ENCODE measurements at regions of chr1 and their contacts with region 1.

Region 1: DNA sequence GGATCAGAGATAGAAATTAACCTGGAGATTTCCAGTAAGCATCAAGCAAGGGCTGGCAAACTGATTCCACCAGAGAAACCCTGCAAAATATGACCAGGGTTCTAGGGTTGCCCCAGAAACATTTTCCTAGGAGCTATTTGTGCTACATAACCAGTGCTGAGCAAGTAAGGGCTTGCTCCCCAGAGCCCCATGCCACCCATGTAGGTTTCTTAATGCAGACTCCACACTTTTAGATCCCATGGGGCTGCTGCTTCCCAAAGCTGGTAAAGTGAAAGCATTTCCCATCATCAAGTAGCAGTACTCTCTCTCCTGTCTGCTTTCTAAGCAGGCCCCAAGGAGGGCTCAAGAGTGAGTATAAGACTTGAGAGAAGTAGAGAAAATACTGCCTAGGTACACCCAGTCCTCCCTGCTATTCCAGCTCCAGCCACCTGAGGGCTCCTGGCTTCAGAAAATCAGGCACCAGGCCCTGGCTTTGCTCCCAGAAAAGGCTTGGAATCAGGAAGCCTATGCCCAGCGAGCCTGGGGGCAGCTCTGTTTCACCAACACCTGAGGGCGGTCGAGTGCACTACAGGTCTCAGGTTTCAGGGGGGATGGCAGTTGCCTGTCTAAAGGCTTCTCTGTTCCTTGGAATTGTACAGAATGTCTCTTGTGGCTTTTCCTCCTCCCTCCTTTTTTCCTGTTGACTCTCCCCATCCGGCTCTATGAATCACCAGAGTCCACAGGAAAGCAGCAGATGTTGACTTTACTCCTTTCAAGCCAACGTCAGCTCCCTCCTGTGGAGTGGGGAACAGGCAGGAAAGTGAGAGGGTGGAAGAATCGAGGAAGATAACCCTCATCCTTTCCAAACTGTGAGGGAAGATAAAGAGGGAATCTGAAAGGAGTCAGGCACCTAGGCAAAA is 6.2 kb upstream of the ANKRD35 start:
- DNase-seq: peak; percentile 21 to 50 (median 38)
- H3K4me3 ChIP-seq: no peak overlapping the region
- H3K4me3 Mint-ChIP-seq: no peak overlapping the region
- H3K27ac ChIP-seq: no peak overlapping the region
- H3K27ac Mint-ChIP-seq: no peak overlapping the region
- H3K4me1 ChIP-seq: no peaks in the 10 kb centered on the region
- H3K4me1 Mint-ChIP-seq: peaks cover 0 to 2% (median under 1%) of the 10 kb centered on the region in 4 donors
- H3K27me3 ChIP-seq: no peaks in the 10 kb centered on the region
- H3K27me3 Mint-ChIP-seq: peaks cover 0 to under 1% of the 10 kb centered on the region in 2 donors

Region 2: GRCh38 chr1:145879775-145880174 is 12.1 kb before region 1 on chr1:
- CTCF ChIA-PET with region 1: interaction called, 21 read pairs
- POLR2A ChIA-PET with region 1: no interaction called
- intact Hi-C with region 1: no loop called
- DNase-seq: no peak
- H3K4me3 ChIP-seq: no peak overlapping the region
- H3K4me3 Mint-ChIP-seq: no peak overlapping the region
- H3K27ac ChIP-seq: no peak overlapping the region
- H3K27ac Mint-ChIP-seq: no peak overlapping the region
- H3K4me1 ChIP-seq: no peaks in the 10 kb centered on the region
- H3K4me1 Mint-ChIP-seq: peaks cover 0 to 5% (median 3%) of the 10 kb centered on the region in 4 donors
- H3K27me3 ChIP-seq: peaks cover 11% of the 10 kb centered on the region
- H3K27me3 Mint-ChIP-seq: peaks cover 10 to 16% of the 10 kb centered on the region in 2 donors

Region 3: DNA sequence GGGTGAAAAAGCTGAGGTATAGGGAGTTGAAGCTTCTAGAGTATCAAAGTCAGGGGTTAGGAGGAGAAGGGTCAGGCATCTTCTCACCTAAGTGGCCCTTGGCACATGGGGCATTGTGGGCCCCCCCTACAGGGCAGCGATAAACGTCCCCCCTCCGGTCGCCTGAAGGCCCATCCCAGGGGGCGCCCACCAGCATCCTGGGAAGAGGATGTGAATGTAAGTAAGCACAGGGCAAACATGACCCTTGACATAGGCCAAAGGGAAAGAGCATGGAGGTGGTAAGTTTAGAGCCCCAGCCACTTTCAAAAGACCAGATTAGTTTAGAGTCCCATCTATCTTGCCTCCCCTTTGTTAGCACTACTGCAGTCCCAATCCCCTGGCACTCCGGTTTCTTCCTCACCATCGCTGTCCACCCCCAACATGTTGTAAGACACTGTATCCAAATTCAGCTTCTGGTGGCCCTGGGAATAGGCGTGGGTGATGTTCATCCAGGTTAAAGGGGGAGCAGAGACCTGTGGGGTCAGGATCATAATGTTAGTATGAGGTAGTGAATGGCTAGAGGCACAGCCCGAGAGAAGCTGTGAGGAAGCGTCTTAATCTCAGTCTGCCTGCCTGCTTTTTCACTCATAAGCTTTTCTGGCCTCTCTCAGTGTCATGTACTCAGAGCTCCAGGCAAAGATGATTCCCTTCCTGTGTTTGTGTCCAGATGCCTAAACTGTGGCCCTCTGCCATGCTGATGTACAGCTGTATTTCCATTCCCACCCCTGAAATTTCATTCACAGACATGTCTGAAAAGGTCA is 15.3 kb after region 1 on chr1:
- CTCF ChIA-PET with region 1: interaction called, 23 read pairs
- POLR2A ChIA-PET with region 1: no interaction called
- intact Hi-C with region 1: no loop called
- DNase-seq: no peak
- H3K4me3 ChIP-seq: no peak overlapping the region
- H3K4me3 Mint-ChIP-seq: no peak overlapping the region
- H3K27ac ChIP-seq: no peak overlapping the region
- H3K27ac Mint-ChIP-seq: no peak overlapping the region
- H3K4me1 ChIP-seq: no peaks in the 10 kb centered on the region
- H3K4me1 Mint-ChIP-seq: peaks cover 4 to 5% (median 5%) of the 10 kb centered on the region in 4 donors
- H3K27me3 ChIP-seq: no peaks in the 10 kb centered on the region
- H3K27me3 Mint-ChIP-seq: no peaks in the 10 kb centered on the region

Region 4: DNA sequence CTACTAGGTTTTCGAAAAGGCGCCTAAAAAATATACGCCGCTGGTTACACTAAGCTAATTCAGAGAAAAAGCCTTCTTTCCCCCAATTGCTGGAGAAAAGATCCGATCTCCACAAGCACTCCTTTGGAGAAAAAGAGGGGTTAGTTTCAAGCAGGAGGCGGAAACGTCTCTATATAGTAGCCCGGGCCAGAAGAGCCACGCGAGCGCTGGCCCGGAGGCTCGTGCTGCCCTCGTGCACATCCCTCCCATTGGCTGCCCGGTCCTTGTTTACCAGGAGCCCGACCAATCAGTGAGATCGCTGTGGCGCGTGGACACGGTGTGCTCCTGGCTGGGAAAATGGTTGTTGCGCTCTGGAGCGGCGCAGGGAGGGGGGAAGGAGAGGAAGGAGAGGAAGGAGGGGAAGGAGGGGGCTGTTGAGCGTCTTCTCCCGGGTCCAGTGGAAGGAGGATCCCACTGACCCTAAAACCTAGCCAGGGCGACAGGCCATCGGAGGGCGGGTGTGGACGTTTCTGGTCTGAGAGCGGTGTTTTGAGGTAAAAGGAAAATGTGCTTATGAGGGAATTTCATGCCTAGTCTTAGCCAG is 104.7 kb after region 1 on chr1 and contains the start of gene TXNIP:
- CTCF ChIA-PET with region 1: no interaction called
- POLR2A ChIA-PET with region 1: no interaction called
- intact Hi-C with region 1: no loop called
- DNase-seq: peak; percentile 90 to 96 (median 94)
- H3K4me3 ChIP-seq: peak within 1 kb of the TSS; percentile 97 to 99
- H3K4me3 Mint-ChIP-seq: peak within 1 kb of the TSS; percentile 96 to 99 (median 98)
- H3K27ac ChIP-seq: peak within 1 kb of the TSS; percentile 75
- H3K27ac Mint-ChIP-seq: peak within 1 kb of the TSS; percentile 96 to 99 (median 97)
- H3K4me1 ChIP-seq: peaks cover 62% of the 10 kb centered on the region
- H3K4me1 Mint-ChIP-seq: peaks cover 39 to 89% (median 50%) of the 10 kb centered on the region in 4 donors
- H3K27me3 ChIP-seq: no peaks in the 10 kb centered on the region
- H3K27me3 Mint-ChIP-seq: no peaks in the 10 kb centered on the region
- total RNA-seq, gene TXNIP: 933 to 985 TPM

Region 5: DNA sequence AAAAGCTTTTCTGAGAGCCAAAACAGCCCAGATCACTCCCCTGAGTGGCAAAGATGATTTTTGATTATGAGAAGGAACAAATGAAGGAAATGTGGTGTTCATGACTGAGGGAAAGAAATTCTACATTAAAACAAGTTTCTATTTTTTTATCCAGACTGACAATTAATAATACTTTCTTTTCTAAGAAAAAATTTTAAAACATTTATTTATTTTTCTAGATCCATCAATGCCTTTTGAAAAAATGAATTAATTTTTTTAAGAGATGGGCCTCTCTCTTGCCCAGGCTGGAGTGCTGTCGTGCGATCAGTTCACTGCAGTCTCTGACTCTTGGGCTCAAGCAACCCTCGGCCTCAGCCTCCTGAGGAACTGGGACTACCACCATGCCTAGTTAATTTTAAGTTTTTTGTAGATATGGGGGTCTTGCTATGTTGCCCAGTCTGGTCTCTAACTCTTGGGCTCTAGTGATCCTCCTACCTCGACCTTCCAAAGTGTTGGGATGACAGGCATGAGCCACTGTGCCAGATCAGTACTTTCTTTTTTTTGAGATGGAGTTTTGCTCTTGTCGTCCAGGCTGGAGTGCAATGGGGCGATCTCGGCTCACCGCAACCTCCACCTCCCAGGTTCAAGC is 115.8 kb after region 1 on chr1:
- CTCF ChIA-PET with region 1: interaction called, 43 read pairs
- POLR2A ChIA-PET with region 1: interaction called, 4 read pairs
- intact Hi-C with region 1: no loop called
- DNase-seq: no peak
- H3K4me3 ChIP-seq: no peak overlapping the region
- H3K4me3 Mint-ChIP-seq: peak overlapping the region in 6 of 8 donors; percentile 79 to 87 (median 84)
- H3K27ac ChIP-seq: no peak overlapping the region
- H3K27ac Mint-ChIP-seq: peak overlapping the region; percentile 45 to 95 (median 88)
- H3K4me1 ChIP-seq: peaks cover 47% of the 10 kb centered on the region
- H3K4me1 Mint-ChIP-seq: peaks cover 24 to 54% (median 33%) of the 10 kb centered on the region in 4 donors
- H3K27me3 ChIP-seq: no peaks in the 10 kb centered on the region
- H3K27me3 Mint-ChIP-seq: no peaks in the 10 kb centered on the region

Region 6: GRCh38 chr1:146012737-146013403 is 121.0 kb after region 1 on chr1:
- CTCF ChIA-PET with region 1: interaction called, 43 read pairs
- POLR2A ChIA-PET with region 1: no interaction called
- intact Hi-C with region 1: loop called (anchors 1 kb)
- DNase-seq: peak; percentile 65 to 73 (median 69)
- H3K4me3 ChIP-seq: no peak overlapping the region
- H3K4me3 Mint-ChIP-seq: no peak overlapping the region
- H3K27ac ChIP-seq: no peak overlapping the region
- H3K27ac Mint-ChIP-seq: no peak overlapping the region
- H3K4me1 ChIP-seq: peaks cover under 1% of the 10 kb centered on the region
- H3K4me1 Mint-ChIP-seq: peaks cover 6 to 9% (median 7%) of the 10 kb centered on the region in 4 donors
- H3K27me3 ChIP-seq: no peaks in the 10 kb centered on the region
- H3K27me3 Mint-ChIP-seq: peaks cover 2 to 4% of the 10 kb centered on the region in 2 donors

Region 7: DNA sequence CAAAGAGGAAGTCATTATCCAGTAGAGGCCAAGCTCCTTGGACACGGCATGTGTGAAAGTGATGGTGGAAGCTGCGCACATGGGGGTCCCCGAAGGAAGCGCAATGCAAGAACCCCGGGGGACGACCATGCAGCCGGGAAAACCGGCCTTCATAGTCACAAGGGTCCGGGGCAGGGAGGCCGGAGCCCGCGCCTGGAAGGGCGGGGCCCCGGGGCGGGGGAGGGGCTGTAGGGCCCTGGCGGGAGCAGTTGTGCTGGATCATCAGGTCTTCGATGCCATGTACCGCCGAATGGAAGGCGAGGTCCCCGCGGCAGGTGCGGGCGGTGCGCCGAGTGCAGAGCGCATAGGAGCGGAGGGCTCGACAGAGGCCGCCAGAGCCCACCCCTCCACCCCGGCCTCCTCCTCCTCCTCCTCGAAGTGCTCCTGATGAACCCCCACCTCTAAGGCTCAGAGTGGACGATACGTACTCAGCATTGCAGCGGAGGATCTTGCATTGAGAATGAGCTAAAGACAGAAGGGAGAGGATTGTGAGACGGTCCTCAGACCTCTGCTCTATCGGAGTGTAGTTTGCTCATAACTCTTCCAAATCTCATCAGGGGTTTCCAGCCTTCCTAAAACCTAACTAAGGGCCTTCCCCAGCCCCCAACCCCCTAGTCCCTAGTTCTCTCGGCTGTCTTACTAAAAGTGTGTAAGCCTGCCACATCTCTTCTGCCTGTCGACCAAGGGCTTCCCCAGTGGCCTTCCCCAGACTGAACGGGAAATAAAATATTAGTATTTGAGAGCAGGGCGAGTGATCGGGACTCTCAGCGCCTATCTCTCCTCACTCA is 127.6 kb after region 1 on chr1:
- CTCF ChIA-PET with region 1: interaction called, 43 read pairs
- POLR2A ChIA-PET with region 1: no interaction called
- intact Hi-C with region 1: no loop called
- DNase-seq: no peak
- H3K4me3 ChIP-seq: no peak overlapping the region
- H3K4me3 Mint-ChIP-seq: peak overlapping the region in 5 of 8 donors; percentile 22 to 72 (median 51)
- H3K27ac ChIP-seq: no peak overlapping the region
- H3K27ac Mint-ChIP-seq: no peak overlapping the region
- H3K4me1 ChIP-seq: peaks cover 12% of the 10 kb centered on the region
- H3K4me1 Mint-ChIP-seq: peaks cover 8 to 10% (median 9%) of the 10 kb centered on the region in 4 donors
- H3K27me3 ChIP-seq: peaks cover 34% of the 10 kb centered on the region
- H3K27me3 Mint-ChIP-seq: peaks cover 35 to 40% of the 10 kb centered on the region in 2 donors